Dorsolateral prefrontal cortex (tissue), 120 donors: ENCODE measurements at regions of chr5 and their contacts with region 1.

Region 1: GRCh38 chr5:132204371-132205135 is 23.1 kb downstream of the P4HA2 start:
- DNase-seq: peak in 7 of 10 donors; percentile 29 to 79 (median 68)
- H3K4me3 ChIP-seq: no peak overlapping the region
- H3K27ac ChIP-seq: peak overlapping the region in 41 of 59 donors; percentile 1 to 78 (median 47)
- H3K27me3 ChIP-seq: no peaks in the 10 kb centered on the region
- CTCF ChIP-seq: no peak

Region 2: DNA sequence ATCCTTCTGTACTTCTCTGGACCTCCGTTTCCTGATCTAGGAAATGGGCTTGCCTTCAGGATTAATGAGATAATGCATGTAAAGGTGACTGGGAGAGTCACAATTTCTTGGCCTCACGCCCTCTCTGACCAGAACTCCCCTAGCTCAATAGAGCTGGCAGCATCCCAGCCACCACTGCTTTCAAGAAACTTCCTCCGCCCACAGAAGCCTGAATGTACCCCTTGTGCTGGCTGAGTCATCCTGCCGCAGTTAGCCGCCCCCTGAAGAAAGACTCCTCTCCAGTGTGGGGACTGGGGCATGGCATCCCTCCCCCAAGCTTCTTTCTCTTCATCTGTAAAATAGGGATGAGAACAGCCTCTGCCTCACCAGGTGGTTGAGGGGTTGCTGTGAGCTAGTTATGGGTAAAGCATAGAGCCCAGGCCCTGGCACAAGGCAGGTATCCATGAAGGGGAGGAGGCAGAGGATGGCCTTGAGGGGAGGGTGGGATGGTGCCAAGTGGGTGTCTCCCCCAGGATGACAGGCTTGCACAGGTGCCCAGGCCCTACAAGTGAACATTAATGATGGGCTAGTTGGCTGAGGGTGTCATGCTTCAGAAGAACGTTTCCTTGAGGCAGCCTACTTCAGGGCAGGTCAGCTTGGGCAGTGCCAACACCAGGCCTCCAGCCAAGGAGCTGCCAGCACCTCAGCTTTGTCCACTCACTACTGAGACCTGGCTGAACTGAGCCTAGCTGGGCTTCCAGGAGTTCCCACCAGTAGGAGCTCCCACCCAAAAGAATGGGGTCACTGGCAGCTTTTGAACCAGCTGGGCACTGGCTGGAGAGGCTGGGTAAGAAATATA is 56.4 kb after region 1 on chr5:
- intact Hi-C with region 1: loop called in 1 of 2 experiments (anchors 1 kb)
- DNase-seq: peak in 5 of 10 donors; percentile 65 to 84 (median 76)
- H3K4me3 ChIP-seq: peak overlapping the region in 1 of 59 donors; percentile 71
- H3K27ac ChIP-seq: peak overlapping the region in 56 of 59 donors; percentile 16 to 93 (median 84)
- H3K27me3 ChIP-seq: peaks cover 0 to 5% (median 0%) of the 10 kb centered on the region in 45 donors
- CTCF ChIP-seq: no peak

Region 3: GRCh38 chr5:132506094-132506692 is 301.6 kb after region 1 on chr5:
- intact Hi-C with region 1: no loop called
- DNase-seq: peak in 1 of 10 donors; percentile 21
- H3K4me3 ChIP-seq: no peak overlapping the region
- H3K27ac ChIP-seq: peak overlapping the region in 5 of 59 donors; percentile 3 to 57 (median 34)
- H3K27me3 ChIP-seq: no peaks in the 10 kb centered on the region
- CTCF ChIP-seq: peak in 54 of 56 donors; percentile 20 to 69 (median 48)